WTC11 (cell line): ENCODE measurements at regions of chr6 and their contacts with region 1.

Region 1: DNA sequence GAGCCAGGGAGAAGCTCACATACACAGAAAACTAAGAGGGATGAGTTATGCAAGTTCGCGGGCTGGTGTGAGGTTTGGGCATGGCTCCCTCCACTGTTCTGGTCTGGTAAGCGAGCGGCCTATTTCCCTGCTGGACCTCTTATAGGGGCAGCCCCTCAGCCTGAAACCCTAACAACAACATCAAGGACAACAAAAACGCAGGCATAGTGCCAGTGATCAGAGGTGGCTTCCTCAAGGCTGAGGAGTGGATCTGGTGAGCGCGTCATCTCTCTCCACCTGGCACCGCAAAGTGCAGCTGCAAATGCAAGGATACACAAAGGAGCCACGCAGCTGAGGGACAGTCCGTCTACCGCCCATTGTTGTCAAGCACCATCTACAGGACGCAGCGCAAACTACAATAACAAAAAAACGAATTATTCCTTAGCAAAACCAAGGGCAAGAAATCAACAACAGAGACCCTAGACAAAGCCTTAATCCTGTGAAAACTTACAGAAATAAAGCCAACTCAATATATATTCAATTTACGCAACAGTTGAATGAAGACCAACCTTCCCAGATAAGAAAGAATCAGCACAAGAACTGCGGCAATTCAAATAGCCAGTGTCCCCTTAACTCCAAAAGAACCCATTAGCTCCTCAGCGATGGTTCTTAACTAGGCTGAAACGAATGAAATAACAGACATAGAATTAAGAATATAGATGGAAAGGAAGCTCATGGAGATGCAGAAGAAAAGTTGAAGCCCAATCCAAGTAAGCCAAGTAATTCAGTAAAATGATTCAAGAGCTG is 9.2 kb upstream of the DEFB110 start:
- DNase-seq: peak; percentile 67
- ATAC-seq: peak; percentile 97
- H3K4me3 Mint-ChIP-seq: peak overlapping the region; percentile 53
- H3K27ac Mint-ChIP-seq: no peak overlapping the region
- H3K4me1 Mint-ChIP-seq: peaks cover 7% of the 10 kb centered on the region; the same call in 1 of the 2 replicates
- H3K27me3 Mint-ChIP-seq: no peaks in the 10 kb centered on the region; the same call in 1 of the 2 replicates
- CTCF ChIP-seq: no peak

Region 2: DNA sequence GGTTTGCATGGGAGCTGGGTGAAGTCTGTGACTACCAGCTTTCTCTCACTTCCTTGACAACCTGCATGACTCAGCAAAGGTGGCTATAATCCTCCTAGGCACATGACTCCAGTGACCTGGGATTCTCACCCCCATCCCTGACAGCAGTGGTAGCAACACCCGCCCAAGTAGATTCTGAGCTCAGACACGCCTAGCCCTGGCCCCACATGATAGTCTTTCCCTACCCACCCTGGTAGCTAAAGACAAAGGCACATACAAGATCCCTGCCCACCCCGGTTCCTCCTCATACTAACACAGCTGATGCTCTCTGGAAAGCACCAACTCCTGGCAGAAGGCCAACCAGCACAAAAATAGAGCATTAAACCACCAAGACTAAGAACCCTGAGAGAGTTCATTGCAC is 138.7 kb before region 1 on chr6:
- CTCF ChIA-PET with region 1: interaction called, 19 read pairs
- POLR2A ChIA-PET with region 1: no interaction called
- DNase-seq: no peak
- ATAC-seq: no peak; the same call in 1 of the 2 replicates
- H3K4me3 Mint-ChIP-seq: no peak overlapping the region
- H3K27ac Mint-ChIP-seq: no peak overlapping the region
- H3K4me1 Mint-ChIP-seq: peaks cover 36% of the 10 kb centered on the region
- H3K27me3 Mint-ChIP-seq: peaks cover 96% of the 10 kb centered on the region
- CTCF ChIP-seq: no peak

Region 3: GRCh38 chr6:49918787-49919186 is 112.2 kb before region 1 on chr6:
- CTCF ChIA-PET with region 1: interaction called, 14 read pairs
- POLR2A ChIA-PET with region 1: no interaction called
- DNase-seq: peak; percentile 26
- ATAC-seq: peak; percentile 89
- H3K4me3 Mint-ChIP-seq: no peak overlapping the region
- H3K27ac Mint-ChIP-seq: peak overlapping the region; percentile 17
- H3K4me1 Mint-ChIP-seq: peaks cover 67% of the 10 kb centered on the region
- H3K27me3 Mint-ChIP-seq: no peaks in the 10 kb centered on the region
- CTCF ChIP-seq: no peak

Region 4: DNA sequence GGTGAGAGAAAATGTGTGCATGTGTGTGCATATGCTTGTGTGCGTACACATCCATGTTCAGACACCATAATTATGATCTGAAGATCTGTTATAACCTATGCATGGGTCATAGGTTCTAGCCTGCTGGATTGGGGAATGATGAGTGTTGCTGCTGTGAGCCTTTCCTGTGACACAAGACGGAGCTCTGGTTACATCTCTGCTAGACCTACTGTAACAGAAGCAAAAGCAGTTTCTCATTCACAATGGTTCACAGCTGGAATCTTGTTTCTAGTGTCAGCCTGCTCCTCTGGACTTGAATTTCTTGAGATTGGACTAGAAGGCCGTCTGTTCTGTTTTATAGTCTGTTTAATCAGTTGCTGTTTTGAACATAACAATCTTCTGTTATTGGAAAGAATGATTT is 107.1 kb before region 1 on chr6:
- CTCF ChIA-PET with region 1: interaction called, 14 read pairs
- POLR2A ChIA-PET with region 1: no interaction called
- DNase-seq: peak; percentile 12
- ATAC-seq: peak; percentile 96
- H3K4me3 Mint-ChIP-seq: no peak overlapping the region
- H3K27ac Mint-ChIP-seq: no peak overlapping the region
- H3K4me1 Mint-ChIP-seq: peaks cover 33% of the 10 kb centered on the region
- H3K27me3 Mint-ChIP-seq: no peaks in the 10 kb centered on the region; the same call in 1 of the 2 replicates
- CTCF ChIP-seq: no peak